MCF 10A (cell line): ENCODE measurements at regions of chr22 and their contacts with region 1.

Region 1: GRCh38 chr22:28800308-28801077 is at the start of gene XBP1:
- DNase-seq: peak; percentile 94
- H3K4me3 Mint-ChIP-seq: peak within 1 kb of the TSS; percentile 87
- H3K27ac Mint-ChIP-seq: peak within 1 kb of the TSS; percentile 97
- H3K4me1 Mint-ChIP-seq: peaks cover 13% of the 10 kb centered on the region
- H3K27me3 Mint-ChIP-seq: no peaks in the 10 kb centered on the region
- CTCF ChIP-seq: no peak
- total RNA-seq, gene XBP1: 274 and 429 TPM in 2 replicates

Region 2: GRCh38 chr22:28711820-28712777 is 88.4 kb before region 1 on chr22:
- CTCF ChIA-PET with region 1: no interaction called
- POLR2A ChIA-PET with region 1: interaction called, 24 read pairs
- intact Hi-C with region 1: loop called (anchors 1 kb)
- DNase-seq: peak; percentile 88
- H3K4me3 Mint-ChIP-seq: peak overlapping the region; percentile 55
- H3K27ac Mint-ChIP-seq: peak overlapping the region; percentile 91
- H3K4me1 Mint-ChIP-seq: peaks cover 29% of the 10 kb centered on the region
- H3K27me3 Mint-ChIP-seq: no peaks in the 10 kb centered on the region
- CTCF ChIP-seq: no peak

Region 3: DNA sequence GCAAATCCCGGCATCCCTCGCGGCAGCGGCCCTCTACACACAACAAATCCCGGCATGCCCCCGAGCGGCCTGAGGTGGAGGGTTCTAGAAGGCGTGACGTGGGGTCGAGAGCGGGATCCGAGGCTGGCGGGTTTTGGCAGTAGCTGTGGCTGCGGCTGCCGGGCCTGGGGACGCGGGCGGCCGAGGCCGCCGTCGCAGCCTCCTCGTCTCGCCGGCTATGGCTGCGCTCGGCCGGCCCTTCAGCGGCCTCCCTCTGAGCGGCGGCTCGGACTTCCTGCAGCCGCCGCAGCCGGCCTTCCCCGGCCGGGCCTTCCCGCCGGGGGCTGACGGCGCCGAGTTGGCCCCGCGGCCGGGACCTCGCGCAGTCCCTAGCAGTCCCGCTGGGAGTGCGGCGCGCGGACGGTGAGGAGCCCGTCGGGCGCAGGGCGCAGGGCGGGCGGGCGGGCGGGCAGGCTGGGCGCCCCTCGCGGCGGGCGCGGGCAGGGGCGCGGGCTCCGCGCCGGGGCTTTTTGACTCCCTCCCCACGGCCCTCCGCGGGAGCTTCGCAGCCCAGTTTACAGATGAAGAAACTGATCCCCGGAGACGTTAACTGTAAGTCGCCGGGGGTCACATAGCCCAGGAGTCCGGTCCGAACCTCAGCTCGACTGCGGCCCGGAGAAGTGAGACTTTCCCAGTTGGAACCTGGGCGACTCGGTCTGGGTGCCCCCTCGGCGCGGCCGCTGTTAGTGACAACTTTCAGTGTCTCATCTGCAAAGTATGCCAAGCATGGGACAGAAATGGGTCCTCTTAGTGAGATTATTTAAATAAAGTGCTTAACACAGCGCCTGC is 27.6 kb before region 1 on chr22 and contains the start of gene CCDC117:
- CTCF ChIA-PET with region 1: no interaction called
- POLR2A ChIA-PET with region 1: interaction called, 74 read pairs
- intact Hi-C with region 1: no loop called
- DNase-seq: peak; percentile 93
- H3K4me3 Mint-ChIP-seq: peak within 1 kb of the TSS; percentile 88
- H3K27ac Mint-ChIP-seq: peak within 1 kb of the TSS; percentile 87
- H3K4me1 Mint-ChIP-seq: peaks cover 10% of the 10 kb centered on the region
- H3K27me3 Mint-ChIP-seq: no peaks in the 10 kb centered on the region
- CTCF ChIP-seq: no peak
- total RNA-seq, gene CCDC117: 12.1 and 14.6 TPM in 2 replicates

Region 4: GRCh38 chr22:28810821-28811491 is 10.5 kb after region 1 on chr22:
- CTCF ChIA-PET with region 1: interaction called, 5 read pairs
- POLR2A ChIA-PET with region 1: interaction called, 12 read pairs
- intact Hi-C with region 1: no loop called
- DNase-seq: no peak
- H3K4me3 Mint-ChIP-seq: no peak overlapping the region
- H3K27ac Mint-ChIP-seq: no peak overlapping the region
- H3K4me1 Mint-ChIP-seq: no peaks in the 10 kb centered on the region
- H3K27me3 Mint-ChIP-seq: no peaks in the 10 kb centered on the region
- CTCF ChIP-seq: no peak

Region 5: GRCh38 chr22:28829358-28830181 is 29.1 kb after region 1 on chr22:
- CTCF ChIA-PET with region 1: interaction called, 17 read pairs
- POLR2A ChIA-PET with region 1: interaction called, 3 read pairs
- intact Hi-C with region 1: no loop called
- DNase-seq: peak; percentile 69
- H3K4me3 Mint-ChIP-seq: no peak overlapping the region
- H3K27ac Mint-ChIP-seq: no peak overlapping the region
- H3K4me1 Mint-ChIP-seq: no peaks in the 10 kb centered on the region
- H3K27me3 Mint-ChIP-seq: no peaks in the 10 kb centered on the region
- CTCF ChIP-seq: peak; percentile 94

Region 6: DNA sequence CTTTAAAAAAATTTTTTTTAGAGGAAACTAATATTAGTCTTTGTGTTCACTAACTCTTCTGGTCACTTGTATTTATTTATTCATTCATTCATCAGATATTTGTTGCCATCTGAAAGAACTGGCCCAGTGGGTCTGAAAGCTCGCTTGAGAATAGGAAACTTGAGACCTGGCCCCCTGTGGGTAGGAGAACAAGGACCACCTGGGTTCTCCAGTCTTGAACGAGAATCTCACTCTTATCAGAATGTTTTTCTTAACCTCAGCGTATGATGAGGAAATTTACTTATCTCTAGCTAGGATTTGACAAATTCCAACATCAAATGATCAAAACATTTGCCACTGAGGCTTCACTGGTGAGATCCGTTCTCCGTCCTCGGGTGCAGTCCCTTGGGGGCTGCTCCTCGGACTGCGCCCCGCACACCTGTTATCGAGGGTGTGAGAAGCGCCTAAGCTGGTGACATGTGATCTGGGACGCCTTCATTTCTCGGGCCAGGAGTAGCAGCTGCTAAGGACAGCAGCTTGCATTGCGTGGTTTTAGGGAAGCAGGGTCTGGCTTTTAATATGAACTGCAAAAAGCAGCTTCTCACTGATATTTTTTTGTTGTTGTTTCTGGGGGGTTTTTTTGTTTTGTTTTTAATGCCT is 254.8 kb after region 1 on chr22:
- CTCF ChIA-PET with region 1: no interaction called
- POLR2A ChIA-PET with region 1: no interaction called
- intact Hi-C with region 1: no loop called
- DNase-seq: no peak
- H3K4me3 Mint-ChIP-seq: no peak overlapping the region
- H3K27ac Mint-ChIP-seq: no peak overlapping the region
- H3K4me1 Mint-ChIP-seq: no peaks in the 10 kb centered on the region
- H3K27me3 Mint-ChIP-seq: no peaks in the 10 kb centered on the region
- CTCF ChIP-seq: no peak

Region 7: GRCh38 chr22:29811377-29812021 is 1011.0 kb after region 1 on chr22:
- CTCF ChIA-PET with region 1: no interaction called
- POLR2A ChIA-PET with region 1: no interaction called
- intact Hi-C with region 1: no loop called
- DNase-seq: no peak
- H3K4me3 Mint-ChIP-seq: no peak overlapping the region
- H3K27ac Mint-ChIP-seq: no peak overlapping the region
- H3K4me1 Mint-ChIP-seq: no peaks in the 10 kb centered on the region
- H3K27me3 Mint-ChIP-seq: no peaks in the 10 kb centered on the region
- CTCF ChIP-seq: no peak